ENCODE measurements at regions of chr17 and their contacts with region 1.

Region 1: DNA sequence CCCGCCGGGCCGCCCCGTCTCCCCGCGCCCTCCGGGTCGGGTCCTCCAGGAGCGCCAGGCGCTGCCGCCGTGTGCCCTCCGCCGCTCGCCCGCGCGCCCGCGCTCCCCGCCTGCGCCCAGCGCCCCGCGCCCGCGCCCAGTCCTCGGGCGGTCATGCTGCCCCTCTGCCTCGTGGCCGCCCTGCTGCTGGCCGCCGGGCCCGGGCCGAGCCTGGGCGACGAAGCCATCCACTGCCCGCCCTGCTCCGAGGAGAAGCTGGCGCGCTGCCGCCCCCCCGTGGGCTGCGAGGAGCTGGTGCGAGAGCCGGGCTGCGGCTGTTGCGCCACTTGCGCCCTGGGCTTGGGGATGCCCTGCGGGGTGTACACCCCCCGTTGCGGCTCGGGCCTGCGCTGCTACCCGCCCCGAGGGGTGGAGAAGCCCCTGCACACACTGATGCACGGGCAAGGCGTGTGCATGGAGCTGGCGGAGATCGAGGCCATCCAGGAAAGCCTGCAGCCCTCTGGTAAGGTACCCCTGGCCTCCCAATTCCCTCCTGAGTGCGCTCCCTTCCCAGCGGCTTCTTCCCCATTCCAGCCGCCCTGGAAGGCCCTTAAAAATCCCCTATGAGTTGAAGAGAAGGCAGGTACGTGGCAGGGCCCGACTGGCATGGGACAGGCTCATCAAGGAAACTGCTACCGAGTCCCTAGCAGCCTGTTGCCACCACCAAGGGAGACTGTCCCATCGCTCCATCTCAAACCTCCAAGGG is 505 bp downstream of the IGFBP4 start:
- DNase-seq: peak; percentile 83
- ATAC-seq: peak; percentile 68
- H3K4me3 Mint-ChIP-seq: peak overlapping the region; percentile 70
- H3K27ac Mint-ChIP-seq: peak overlapping the region; percentile 88
- H3K4me1 Mint-ChIP-seq: peaks cover 45% of the 10 kb centered on the region
- H3K27me3 Mint-ChIP-seq: peaks cover 5% of the 10 kb centered on the region

Region 2: GRCh38 chr17:40264458-40265185 is 179.1 kb before region 1 on chr17:
- CTCF ChIA-PET with region 1: no interaction called
- POLR2A ChIA-PET with region 1: no interaction called
- intact Hi-C with region 1: no loop called
- DNase-seq: no peak
- ATAC-seq: no peak
- H3K4me3 Mint-ChIP-seq: no peak overlapping the region
- H3K27ac Mint-ChIP-seq: no peak overlapping the region
- H3K4me1 Mint-ChIP-seq: peaks cover 10% of the 10 kb centered on the region
- H3K27me3 Mint-ChIP-seq: no peaks in the 10 kb centered on the region

Region 3: GRCh38 chr17:40399185-40399584 is 44.6 kb before region 1 on chr17:
- CTCF ChIA-PET with region 1: interaction called, 4 read pairs
- POLR2A ChIA-PET with region 1: no interaction called
- intact Hi-C with region 1: loop called (anchors 1 to 5 kb)
- DNase-seq: no peak
- ATAC-seq: peak; percentile 47
- H3K4me3 Mint-ChIP-seq: no peak overlapping the region
- H3K27ac Mint-ChIP-seq: no peak overlapping the region
- H3K4me1 Mint-ChIP-seq: peaks cover 12% of the 10 kb centered on the region
- H3K27me3 Mint-ChIP-seq: no peaks in the 10 kb centered on the region

Region 4: GRCh38 chr17:40466298-40466971 is 22.7 kb after region 1 on chr17:
- CTCF ChIA-PET with region 1: interaction called, 6 read pairs
- POLR2A ChIA-PET with region 1: interaction called, 11 read pairs
- intact Hi-C with region 1: no loop called
- DNase-seq: no peak
- ATAC-seq: no peak
- H3K4me3 Mint-ChIP-seq: no peak overlapping the region
- H3K27ac Mint-ChIP-seq: no peak overlapping the region
- H3K4me1 Mint-ChIP-seq: no peaks in the 10 kb centered on the region
- H3K27me3 Mint-ChIP-seq: peaks cover 2% of the 10 kb centered on the region

Region 5: DNA sequence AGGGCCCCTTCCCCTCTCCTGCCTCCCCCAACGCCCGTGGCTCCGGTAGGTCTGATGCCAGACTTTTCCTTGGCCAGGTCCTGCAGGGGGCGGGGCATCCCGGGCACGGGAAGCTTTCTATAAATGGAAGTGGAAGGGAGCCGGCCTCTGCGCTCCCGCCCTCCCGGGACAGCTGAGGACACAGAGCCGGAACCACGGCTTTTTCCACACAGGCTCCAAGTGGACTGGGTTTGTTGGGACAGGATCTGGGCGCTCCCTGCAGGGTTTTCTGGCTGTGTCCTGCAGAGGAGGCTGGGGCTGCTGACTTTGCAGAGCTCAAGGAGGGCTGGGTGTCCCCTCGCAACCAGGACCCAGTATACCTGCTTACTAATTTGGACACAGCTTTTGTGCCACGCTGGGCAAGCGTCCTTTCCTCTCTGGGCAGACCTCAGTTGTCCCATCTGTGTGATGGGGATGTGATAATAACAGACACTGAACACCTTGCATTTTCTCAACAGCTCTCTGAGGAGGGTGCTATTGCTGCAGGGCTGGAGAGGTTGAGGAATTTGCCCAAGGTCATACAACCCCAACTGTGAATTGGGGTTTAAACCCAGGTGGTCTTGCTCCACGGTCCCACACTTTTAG is 55.9 kb after region 1 on chr17:
- CTCF ChIA-PET with region 1: interaction called, 10 read pairs
- POLR2A ChIA-PET with region 1: no interaction called
- intact Hi-C with region 1: no loop called
- DNase-seq: no peak
- ATAC-seq: no peak
- H3K4me3 Mint-ChIP-seq: no peak overlapping the region
- H3K27ac Mint-ChIP-seq: no peak overlapping the region
- H3K4me1 Mint-ChIP-seq: peaks cover 2% of the 10 kb centered on the region
- H3K27me3 Mint-ChIP-seq: peaks cover 4% of the 10 kb centered on the region

Region 6: GRCh38 chr17:40622509-40622928 is 178.8 kb after region 1 on chr17:
- CTCF ChIA-PET with region 1: no interaction called
- POLR2A ChIA-PET with region 1: no interaction called
- intact Hi-C with region 1: loop called in 1 of 2 experiments (anchors 5 kb)
- DNase-seq: peak; percentile 41
- ATAC-seq: peak; percentile 25
- H3K4me3 Mint-ChIP-seq: no peak overlapping the region
- H3K27ac Mint-ChIP-seq: peak overlapping the region; percentile 77
- H3K4me1 Mint-ChIP-seq: peaks cover 61% of the 10 kb centered on the region
- H3K27me3 Mint-ChIP-seq: no peaks in the 10 kb centered on the region